ENCODE measurements at regions of chr1 and their contacts with region 1.

Region 1: GRCh38 chr1:224205438-224205840 is 22.4 kb downstream of the DEGS1 start:
- DNase-seq: peak; percentile 7
- ATAC-seq: peak; percentile 75
- H3K4me3 ChIP-seq: peak overlapping the region; percentile 29 to 54 (median 32)
- H3K27ac ChIP-seq: peak overlapping the region; percentile 55
- H3K4me1 ChIP-seq: peaks cover 62% of the 10 kb centered on the region
- H3K27me3 ChIP-seq: 0 out of 5 replicates have a peak, but pooled peaks cover 0 to 3% of the 10 kb centered on the region in 2 experiments
- CTCF ChIP-seq: no peak
- EP300 ChIP-seq: no peak
- POLR2A ChIP-seq: no peak
- RAD21 ChIP-seq: no peak

Region 2: DNA sequence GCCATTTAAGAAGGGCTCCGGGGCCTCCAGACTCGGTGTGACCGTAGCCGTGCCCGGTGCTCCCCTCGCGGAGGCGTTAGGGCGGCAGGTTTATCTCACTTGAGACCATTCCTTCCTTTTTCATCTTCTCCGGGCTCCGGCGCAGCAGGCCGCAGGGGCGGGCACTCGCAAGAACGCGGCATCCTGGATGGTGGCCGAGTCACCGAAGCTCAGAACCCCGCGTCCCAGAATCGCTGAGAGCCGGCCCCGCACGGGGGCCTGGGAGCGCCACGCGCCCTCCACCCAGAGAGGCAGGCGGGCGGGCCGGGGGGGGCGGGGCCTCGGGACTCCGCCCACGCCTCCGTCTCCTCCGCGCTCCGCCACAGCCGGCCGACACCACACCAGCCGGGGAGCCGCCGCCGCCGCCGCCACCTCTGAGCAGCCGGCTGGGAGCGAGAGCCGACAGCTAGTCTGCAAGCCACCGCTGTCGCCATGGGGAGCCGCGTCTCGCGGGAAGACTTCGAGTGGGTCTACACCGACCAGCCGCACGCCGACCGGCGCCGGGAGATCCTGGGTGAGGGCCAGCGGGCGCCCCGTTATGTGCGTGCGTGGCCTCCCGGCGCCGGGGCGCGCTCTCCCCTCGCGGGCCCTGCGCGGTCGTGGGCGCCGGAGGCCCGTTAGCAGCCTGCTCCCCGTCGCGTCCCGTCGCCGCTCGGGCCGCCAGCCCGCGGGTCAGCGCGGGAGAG is 22.4 kb before region 1 on chr1 and contains the start of gene DEGS1:
- CTCF ChIA-PET with region 1: no interaction called
- POLR2A ChIA-PET with region 1: interaction called, 17 read pairs
- in situ Hi-C with region 1: no loop called
- intact Hi-C with region 1: no loop called
- DNase-seq: peak; percentile 72
- ATAC-seq: peak; percentile 88
- H3K4me3 ChIP-seq: peak within 1 kb of the TSS; percentile 60 to 89 (median 87)
- H3K27ac ChIP-seq: peak within 1 kb of the TSS; percentile 67
- H3K4me1 ChIP-seq: peaks cover 36% of the 10 kb centered on the region
- H3K27me3 ChIP-seq: no peaks in the 10 kb centered on the region
- CTCF ChIP-seq: no peak; the same call in 1 of the 2 replicates
- EP300 ChIP-seq: no peak
- POLR2A ChIP-seq: peak; percentile 52 to 79
- RAD21 ChIP-seq: peak; percentile 29
- total RNA-seq, gene DEGS1: 7.8 and 18.1 TPM in 2 replicates

Measured in HepG2 (cell line).